ENCODE measurements at regions of chr9 and their contacts with region 1.

Region 1: GRCh38 chr9:117672397-117672796 is 31.8 kb upstream of the TLR4 start:
- DNase-seq: no peak
- H3K4me3 ChIP-seq: no peak overlapping the region
- H3K27ac ChIP-seq: no peak overlapping the region
- H3K4me1 ChIP-seq: no peaks in the 10 kb centered on the region
- H3K27me3 ChIP-seq: no peaks in the 10 kb centered on the region
- CTCF ChIP-seq: no peak

Region 2: DNA sequence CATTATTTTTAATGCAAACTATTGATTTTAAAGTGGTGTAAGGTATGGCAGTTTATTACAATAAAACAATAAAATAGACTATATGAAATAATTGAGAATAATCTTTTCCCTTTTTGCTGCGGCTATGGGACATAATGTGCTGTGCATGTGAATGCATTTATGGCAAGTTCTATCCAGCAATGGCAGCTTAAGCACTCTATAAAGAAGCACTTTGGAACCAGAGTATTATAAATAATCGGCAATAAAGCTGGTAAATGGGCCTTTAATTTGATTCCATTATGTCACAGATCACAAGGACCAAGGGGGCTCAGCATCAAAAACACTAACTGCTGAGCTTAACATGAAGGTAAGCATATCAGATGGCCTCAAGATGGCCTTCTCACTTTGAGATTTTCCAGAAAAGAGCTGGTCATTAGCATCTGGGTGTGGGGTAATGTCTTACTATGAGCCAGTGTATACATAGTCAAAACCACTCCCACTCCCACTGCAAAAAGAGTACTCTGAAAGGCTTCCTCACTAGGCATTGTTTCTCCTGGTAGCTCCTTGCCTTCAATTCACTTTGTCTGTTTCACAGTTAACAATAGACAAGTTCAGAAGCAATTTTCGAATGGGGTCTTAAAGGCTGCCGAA is 160.4 kb before region 1 on chr9:
- intact Hi-C with region 1: no loop called
- DNase-seq: no peak
- H3K4me3 ChIP-seq: no peak overlapping the region
- H3K27ac ChIP-seq: no peak overlapping the region
- H3K4me1 ChIP-seq: no peaks in the 10 kb centered on the region
- H3K27me3 ChIP-seq: no peaks in the 10 kb centered on the region
- CTCF ChIP-seq: no peak

Region 3: GRCh38 chr9:117777823-117778222 is 105.4 kb after region 1 on chr9:
- intact Hi-C with region 1: loop called (anchors 10 kb)
- DNase-seq: no peak
- H3K4me3 ChIP-seq: no peak overlapping the region
- H3K27ac ChIP-seq: no peak overlapping the region
- H3K4me1 ChIP-seq: no peaks in the 10 kb centered on the region
- H3K27me3 ChIP-seq: no peaks in the 10 kb centered on the region
- CTCF ChIP-seq: no peak

Region 4: GRCh38 chr9:118192810-118193209 is 520.4 kb after region 1 on chr9:
- intact Hi-C with region 1: no loop called
- DNase-seq: no peak
- H3K4me3 ChIP-seq: no peak overlapping the region
- H3K27ac ChIP-seq: no peak overlapping the region
- H3K4me1 ChIP-seq: no peaks in the 10 kb centered on the region
- H3K27me3 ChIP-seq: no peaks in the 10 kb centered on the region
- CTCF ChIP-seq: no peak

Measured in colonic mucosa (tissue), 4 donors.